Transverse colon (tissue), 4 donors: ENCODE measurements at regions of chr14 and their contacts with region 1.

Region 1: GRCh38 chr14:50532502-50533240 is at the start of gene MAP4K5:
- DNase-seq: peak; percentile 94
- H3K4me3 ChIP-seq: peak within 1 kb of the TSS; percentile 87 to 99 (median 96)
- H3K27ac ChIP-seq: peak within 1 kb of the TSS; percentile 96 to 99 (median 98)
- H3K4me1 ChIP-seq: peaks cover 7 to 40% (median 17%) of the 10 kb centered on the region in 4 donors
- H3K27me3 ChIP-seq: no peaks in the 10 kb centered on the region
- CTCF ChIP-seq: peak; percentile 77 to 95 (median 85)
- EP300 ChIP-seq: no peak
- POLR2A ChIP-seq: peak; percentile 49
- total RNA-seq, gene MAP4K5: 40.8 to 173 (median 105) TPM

Region 2: GRCh38 chr14:49852301-49853157 is 680.1 kb before region 1 on chr14 and contains the start of gene NEMF:
- in situ Hi-C with region 1: loop called in 2 of 4 experiments (anchors 25 kb)
- intact Hi-C with region 1: no loop called
- DNase-seq: peak; percentile 88
- H3K4me3 ChIP-seq: peak within 1 kb of the TSS; percentile 61 to 91 (median 72)
- H3K27ac ChIP-seq: peak within 1 kb of the TSS; percentile 91 to 94 (median 93)
- H3K4me1 ChIP-seq: peaks cover 16 to 40% (median 17%) of the 10 kb centered on the region in 4 donors
- H3K27me3 ChIP-seq: no peaks in the 10 kb centered on the region
- CTCF ChIP-seq: peak; percentile 73 to 97 (median 80)
- EP300 ChIP-seq: no peak
- POLR2A ChIP-seq: peak; percentile 89
- total RNA-seq, gene NEMF: 50.2 to 129 (median 79.3) TPM

Region 3: DNA sequence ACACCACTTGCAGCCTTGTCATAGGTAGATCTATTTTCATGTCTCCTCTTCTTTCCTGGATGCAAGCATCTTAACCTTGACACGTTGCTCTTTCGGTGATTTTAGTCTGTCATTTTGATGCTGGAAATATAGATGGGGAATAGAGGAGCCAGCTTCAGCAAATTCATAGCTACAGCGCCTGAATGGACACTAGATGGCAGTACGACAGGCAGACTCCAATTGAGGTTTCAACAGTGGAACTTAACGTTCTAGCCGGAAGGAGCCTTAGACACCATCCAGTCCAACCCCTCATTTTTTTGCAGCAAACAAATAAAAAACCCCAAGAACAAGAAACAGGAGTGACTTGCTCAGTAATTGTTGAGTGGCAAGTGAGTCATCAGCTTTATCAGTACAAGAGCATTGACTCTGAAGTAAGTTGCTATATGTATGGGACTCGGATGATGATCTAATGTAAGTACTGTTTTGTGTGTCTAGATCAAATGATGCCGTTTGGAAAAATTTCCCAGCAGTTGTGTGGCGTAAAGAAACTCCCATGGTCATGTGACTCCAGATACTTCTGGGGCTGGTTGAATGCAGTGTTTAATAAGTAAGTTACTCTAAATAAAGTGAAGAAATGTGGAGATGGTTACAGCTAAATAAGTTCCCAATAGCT is 211.5 kb before region 1 on chr14:
- in situ Hi-C with region 1: loop called (anchors 5 to 10 kb)
- intact Hi-C with region 1: loop called (anchors 5 kb)
- DNase-seq: peak; percentile 75
- H3K4me3 ChIP-seq: peak overlapping the region in 1 of 4 donors; percentile 23
- H3K27ac ChIP-seq: peak overlapping the region; percentile 74 to 81 (median 78)
- H3K4me1 ChIP-seq: peaks cover 7 to 21% (median 12%) of the 10 kb centered on the region in 4 donors
- H3K27me3 ChIP-seq: no peaks in the 10 kb centered on the region
- CTCF ChIP-seq: peak; percentile 82 to 84 (median 83)
- EP300 ChIP-seq: no peak
- POLR2A ChIP-seq: no peak

Region 4: GRCh38 chr14:50501642-50502041 is 31.0 kb before region 1 on chr14:
- in situ Hi-C with region 1: no loop called
- intact Hi-C with region 1: no loop called
- DNase-seq: no peak
- H3K4me3 ChIP-seq: no peak overlapping the region
- H3K27ac ChIP-seq: no peak overlapping the region
- H3K4me1 ChIP-seq: no peaks in the 10 kb centered on the region
- H3K27me3 ChIP-seq: no peaks in the 10 kb centered on the region
- CTCF ChIP-seq: no peak
- EP300 ChIP-seq: no peak
- POLR2A ChIP-seq: no peak